Calu3 (cell line): ENCODE measurements at regions of chr10 and their contacts with region 1.

Region 1: DNA sequence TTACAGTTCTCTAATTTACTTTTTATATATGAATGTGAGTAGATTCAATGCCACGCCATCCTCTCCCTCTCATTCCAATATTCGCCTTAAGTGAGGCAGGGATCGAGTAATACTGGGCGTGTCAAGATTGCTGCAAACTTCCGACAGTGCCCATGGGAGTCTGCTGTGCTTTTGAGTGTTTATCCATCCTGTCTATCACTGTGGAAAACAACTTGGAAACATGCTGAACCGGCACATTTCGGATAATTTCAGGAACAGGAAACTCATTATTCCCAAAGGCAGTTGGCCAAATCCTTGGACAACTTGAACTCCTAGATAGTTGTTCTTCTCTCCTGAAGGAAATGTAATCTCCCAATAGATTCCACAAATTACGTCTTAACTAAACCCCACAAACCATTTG is 28.5 kb downstream of the PIP4K2A start:
- DNase-seq: no peak
- H3K4me3 Mint-ChIP-seq: no peak overlapping the region
- H3K27ac Mint-ChIP-seq: no peak overlapping the region
- H3K4me1 Mint-ChIP-seq: peaks cover 43% of the 10 kb centered on the region
- H3K27me3 Mint-ChIP-seq: no peaks in the 10 kb centered on the region
- CTCF ChIP-seq: no peak

Region 2: GRCh38 chr10:22697101-22697500 is 11.2 kb after region 1 on chr10:
- CTCF ChIA-PET with region 1: interaction called, 15 read pairs
- intact Hi-C with region 1: no loop called
- DNase-seq: no peak
- H3K4me3 Mint-ChIP-seq: no peak overlapping the region
- H3K27ac Mint-ChIP-seq: no peak overlapping the region
- H3K4me1 Mint-ChIP-seq: peaks cover 39% of the 10 kb centered on the region
- H3K27me3 Mint-ChIP-seq: no peaks in the 10 kb centered on the region
- CTCF ChIP-seq: no peak